ENCODE measurements at regions of chrX and their contacts with region 1.

Region 1: GRCh38 chrX:30343203-30343602 is 34.0 kb upstream of the NR0B1 start:
- DNase-seq: no peak

Region 2: DNA sequence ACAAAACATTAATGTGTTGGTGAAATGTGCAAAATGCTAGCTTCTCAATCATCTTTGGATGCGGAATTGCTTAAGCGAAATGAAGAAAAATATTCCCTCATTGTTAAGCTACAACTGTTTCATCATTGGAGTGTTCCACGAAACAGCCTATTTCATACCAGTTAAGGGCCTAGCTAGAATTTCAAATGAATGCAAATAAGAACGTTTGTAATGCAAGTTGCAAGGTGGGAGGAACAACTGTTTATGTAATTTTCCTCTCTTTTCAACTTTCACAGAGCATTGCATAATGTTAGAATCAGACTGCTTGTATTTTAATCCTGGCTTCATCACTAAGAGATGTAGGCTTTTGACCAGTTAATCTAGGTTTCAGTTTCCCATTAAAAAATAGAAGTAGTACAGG is 1275.9 kb before region 1 on chrX:
- intact Hi-C with region 1: loop called in 1 of 2 experiments (anchors 5 kb)
- DNase-seq: no peak

Region 3: DNA sequence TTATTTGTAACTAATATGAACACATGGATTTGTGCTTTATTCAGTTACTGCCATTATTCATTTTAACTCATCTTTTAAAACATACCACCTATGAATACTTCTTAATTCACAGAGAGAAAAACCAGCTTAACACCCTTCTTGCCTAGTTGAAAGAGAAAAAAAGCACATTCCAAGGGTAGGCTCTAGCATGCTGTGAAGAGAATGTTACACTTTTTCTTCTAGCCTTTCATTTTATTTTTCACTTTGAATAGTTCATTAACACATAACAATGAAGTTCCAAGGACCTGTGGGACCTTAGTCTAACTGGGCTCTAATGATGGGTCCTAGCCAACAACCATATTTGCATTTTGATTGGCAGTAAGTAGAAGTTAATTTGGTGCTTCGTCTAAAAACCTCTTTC is 407.7 kb before region 1 on chrX:
- intact Hi-C with region 1: loop called in 1 of 2 experiments (anchors 10 kb)
- DNase-seq: no peak

Region 4: DNA sequence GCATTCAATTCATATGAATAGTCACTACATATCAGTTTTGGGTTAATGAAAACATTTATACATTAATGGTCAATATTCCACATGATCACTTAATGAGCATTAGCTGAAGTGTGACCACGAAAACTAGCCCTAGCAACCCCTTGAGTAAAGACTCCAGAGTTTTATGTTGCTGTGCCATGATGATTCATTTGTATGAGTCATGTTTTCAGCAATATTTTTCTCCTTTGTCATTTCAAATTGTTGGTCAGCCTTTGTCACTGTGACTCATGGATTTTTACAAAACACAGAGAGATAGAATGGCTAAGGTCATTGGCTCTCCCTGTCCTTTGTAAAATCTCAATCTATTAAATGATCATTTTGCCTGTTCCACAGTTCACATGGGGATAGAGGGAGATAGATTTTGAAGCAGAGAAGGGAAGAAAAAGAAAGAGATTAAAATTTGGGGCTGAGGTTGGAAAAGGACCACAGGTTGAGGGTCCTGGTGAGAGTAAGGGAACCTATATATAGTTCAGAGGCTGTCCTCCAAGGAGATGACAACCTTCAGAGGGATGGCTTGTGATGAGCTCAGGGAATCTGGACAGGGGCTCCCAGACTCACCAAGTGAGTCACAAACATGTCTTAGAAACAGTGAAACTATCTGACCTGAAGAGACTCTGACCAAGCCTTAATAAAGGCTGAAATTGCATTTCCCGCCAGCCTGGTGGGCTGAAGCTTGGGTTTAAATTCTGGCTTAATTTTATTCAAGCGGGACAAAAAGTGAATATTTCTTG is 59.6 kb before region 1 on chrX:
- intact Hi-C with region 1: no loop called
- DNase-seq: no peak

Region 5: DNA sequence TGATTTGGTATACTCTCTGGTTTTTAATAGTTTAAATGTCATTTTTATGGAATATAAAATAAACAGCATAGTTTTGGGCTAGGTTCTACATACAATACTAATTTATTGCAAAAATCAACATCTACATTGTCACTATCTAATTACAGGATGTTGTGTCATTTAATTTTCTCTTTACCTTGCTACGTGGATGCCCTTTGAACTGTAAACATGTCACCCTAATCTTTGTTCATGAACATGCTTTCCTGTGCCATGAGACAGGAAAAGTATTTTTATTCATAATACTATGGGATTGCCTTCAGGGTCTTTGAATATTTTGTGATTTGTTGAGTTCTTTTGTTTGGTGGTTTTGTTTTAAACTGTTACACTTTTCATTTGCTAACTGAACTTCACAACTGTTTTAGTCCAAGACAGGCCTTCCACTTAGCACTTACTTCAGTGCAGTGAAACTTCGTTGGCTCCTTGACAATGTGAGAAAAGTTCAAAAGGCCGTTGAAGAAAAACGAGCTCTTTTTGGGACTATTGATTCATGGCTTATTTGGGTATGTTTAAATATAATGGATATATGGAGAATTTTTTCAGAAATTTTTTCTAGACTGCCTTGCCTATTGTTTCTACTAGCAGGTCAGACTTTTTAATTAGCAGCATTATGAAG is 350.9 kb after region 1 on chrX:
- intact Hi-C with region 1: no loop called
- DNase-seq: no peak

Measured in posterior vena cava (tissue), 2 donors.